ENCODE measurements at regions of chr4 and their contacts with region 1.

Region 1: GRCh38 chr4:148441986-148442831 is at the start of gene NR3C2:
- DNase-seq: peak; percentile 95 to 99 (median 97)
- ATAC-seq: peak; percentile 74
- H3K4me3 ChIP-seq: peak within 1 kb of the TSS; percentile 95
- H3K4me3 Mint-ChIP-seq: peak within 1 kb of the TSS; percentile 98
- H3K27ac ChIP-seq: peak within 1 kb of the TSS; percentile 93 to 99
- H3K27ac Mint-ChIP-seq: peak within 1 kb of the TSS; percentile 99
- H3K4me1 ChIP-seq: peaks cover 48% of the 10 kb centered on the region
- H3K4me1 Mint-ChIP-seq: peaks cover 53% of the 10 kb centered on the region
- H3K27me3 ChIP-seq: no peaks in the 10 kb centered on the region
- H3K27me3 Mint-ChIP-seq: no peaks in the 10 kb centered on the region
- CTCF ChIP-seq: no peak
- total RNA-seq, gene NR3C2: 29.6 to 32.4 TPM

Region 2: GRCh38 chr4:147683717-147684700 is 758.2 kb before region 1 on chr4 and contains the start of gene PRMT9:
- CTCF ChIA-PET with region 1: no interaction called
- POLR2A ChIA-PET with region 1: interaction called, 4 read pairs
- intact Hi-C with region 1: loop called (anchors 1 to 5 kb)
- DNase-seq: peak; percentile 74 to 94 (median 88)
- ATAC-seq: peak; percentile 97
- H3K4me3 ChIP-seq: peak within 1 kb of the TSS; percentile 68 to 98
- H3K4me3 Mint-ChIP-seq: peak within 1 kb of the TSS; percentile 98
- H3K27ac ChIP-seq: peak within 1 kb of the TSS; percentile 92 to 98
- H3K27ac Mint-ChIP-seq: peak within 1 kb of the TSS; percentile 99
- H3K4me1 ChIP-seq: peaks cover 11% of the 10 kb centered on the region
- H3K4me1 Mint-ChIP-seq: peaks cover 40% of the 10 kb centered on the region
- H3K27me3 ChIP-seq: no peaks in the 10 kb centered on the region
- H3K27me3 Mint-ChIP-seq: peaks cover 8% of the 10 kb centered on the region
- CTCF ChIP-seq: no peak
- total RNA-seq, gene PRMT9: 36.4 to 40.3 TPM

Region 3: DNA sequence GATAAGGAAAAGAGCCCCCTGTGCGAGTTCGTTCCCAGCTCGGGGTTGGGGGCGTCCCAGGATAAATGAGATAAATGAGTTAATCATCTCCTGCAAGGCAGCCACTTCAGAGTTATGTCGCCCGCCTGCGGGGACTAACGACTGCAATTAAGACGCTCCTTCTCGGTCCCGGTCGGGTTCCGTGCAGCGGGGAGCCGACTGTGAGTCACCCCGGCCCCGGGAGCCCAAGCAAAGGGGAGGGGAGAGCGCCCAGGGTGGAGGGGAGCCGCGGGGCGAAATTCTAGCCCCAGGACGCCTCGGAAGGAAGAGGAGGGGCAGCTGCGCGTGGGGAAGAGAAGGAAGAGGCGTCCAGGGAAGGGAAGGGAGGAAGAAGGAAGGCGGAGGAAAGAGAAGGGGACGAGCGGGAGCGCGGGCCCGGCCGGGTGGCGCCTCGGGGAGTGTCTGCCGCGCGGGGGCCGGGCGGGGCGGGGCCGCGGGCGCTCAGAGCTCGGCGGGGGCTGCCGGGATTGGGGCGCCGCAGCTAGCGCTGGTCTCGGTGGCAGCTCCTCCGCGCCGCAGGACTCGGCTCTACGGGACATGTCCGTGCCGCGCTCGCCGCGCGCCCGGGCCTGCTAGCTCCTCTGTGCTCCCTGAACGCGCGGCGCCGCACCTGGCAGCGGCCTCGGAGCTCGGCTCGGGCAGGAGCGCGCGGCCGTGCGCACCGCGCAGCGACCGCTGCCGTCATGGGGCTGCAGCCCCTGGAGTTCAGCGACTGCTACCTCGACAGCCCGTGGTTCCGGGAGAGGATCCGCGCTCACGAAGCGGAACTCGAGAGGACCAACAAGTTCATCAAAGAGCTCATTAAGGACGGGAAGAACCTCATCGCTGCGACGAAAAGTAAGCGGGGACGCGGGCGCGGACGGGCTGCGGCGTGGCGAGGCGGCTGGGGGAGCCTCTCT is 710.4 kb before region 1 on chr4 and contains the start of gene ARHGAP10:
- CTCF ChIA-PET with region 1: no interaction called
- POLR2A ChIA-PET with region 1: interaction called, 10 read pairs
- intact Hi-C with region 1: loop called (anchors 5 kb)
- DNase-seq: peak; percentile 18 to 79 (median 72)
- ATAC-seq: peak; percentile 66
- H3K4me3 ChIP-seq: peak within 1 kb of the TSS; percentile 91
- H3K4me3 Mint-ChIP-seq: peak within 1 kb of the TSS; percentile 90
- H3K27ac ChIP-seq: peak within 1 kb of the TSS; percentile 55 to 60
- H3K27ac Mint-ChIP-seq: peak within 1 kb of the TSS; percentile 83
- H3K4me1 ChIP-seq: peaks cover 18% of the 10 kb centered on the region
- H3K4me1 Mint-ChIP-seq: peaks cover 32% of the 10 kb centered on the region
- H3K27me3 ChIP-seq: no peaks in the 10 kb centered on the region
- H3K27me3 Mint-ChIP-seq: peaks cover 2% of the 10 kb centered on the region
- CTCF ChIP-seq: no peak
- total RNA-seq, gene ARHGAP10: 7.2 to 7.4 TPM

Region 4: DNA sequence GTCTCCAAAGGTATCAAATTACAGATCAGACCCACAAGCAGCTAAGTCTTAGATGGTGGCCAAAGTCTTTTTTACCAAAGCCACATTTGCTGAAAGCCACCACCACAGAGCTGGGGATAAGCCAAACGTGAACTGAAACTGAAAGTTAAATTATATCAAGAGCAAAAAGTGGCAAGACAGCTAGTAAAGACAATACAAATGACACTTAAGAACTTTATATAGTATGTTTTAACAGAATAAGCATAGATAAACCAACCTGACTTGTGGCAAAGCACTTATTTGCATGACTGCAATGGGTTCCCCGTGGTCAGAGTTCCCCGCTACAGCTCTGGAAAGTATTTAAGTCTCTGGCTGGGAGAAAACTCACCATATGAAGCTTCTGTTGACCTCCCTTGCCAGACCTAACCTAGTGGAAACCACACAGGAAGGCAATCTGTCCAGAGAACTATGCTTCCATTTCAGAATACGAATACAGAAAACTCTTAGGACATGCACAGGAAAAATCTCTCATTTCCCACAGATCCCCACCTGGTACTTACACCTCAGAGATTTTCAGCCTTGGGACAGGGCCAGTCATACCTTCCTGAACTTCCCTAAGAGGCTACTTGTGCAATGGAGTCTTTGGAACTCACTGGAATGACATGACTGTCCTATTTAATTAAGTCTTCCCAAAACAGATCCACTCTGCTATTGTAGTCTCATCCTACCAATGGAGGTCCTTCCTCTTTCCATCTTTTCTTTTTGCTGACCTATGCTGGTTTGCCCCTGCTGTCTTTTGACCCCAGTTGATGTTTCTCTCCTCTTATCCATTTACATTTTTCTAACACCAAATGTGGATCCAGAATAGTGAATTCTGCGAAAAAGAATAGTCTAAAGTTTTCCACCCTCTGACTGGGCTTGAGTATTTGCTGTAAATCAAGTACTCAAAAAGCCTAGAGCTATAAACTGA is 225.1 kb before region 1 on chr4:
- CTCF ChIA-PET with region 1: no interaction called
- POLR2A ChIA-PET with region 1: interaction called, 8 read pairs
- intact Hi-C with region 1: loop called in 1 of 2 experiments (anchors 5 kb)
- DNase-seq: peak in 3 of 9 experiments; percentile 19 to 65 (median 53)
- ATAC-seq: peak; percentile 82
- H3K4me3 ChIP-seq: peak overlapping the region; percentile 19 to 44
- H3K4me3 Mint-ChIP-seq: peak overlapping the region; percentile 67
- H3K27ac ChIP-seq: peak overlapping the region; percentile 8 to 86
- H3K27ac Mint-ChIP-seq: peak overlapping the region; percentile 85
- H3K4me1 ChIP-seq: peaks cover 16% of the 10 kb centered on the region
- H3K4me1 Mint-ChIP-seq: peaks cover 37% of the 10 kb centered on the region
- H3K27me3 ChIP-seq: no peaks in the 10 kb centered on the region
- H3K27me3 Mint-ChIP-seq: no peaks in the 10 kb centered on the region
- CTCF ChIP-seq: no peak

Region 5: DNA sequence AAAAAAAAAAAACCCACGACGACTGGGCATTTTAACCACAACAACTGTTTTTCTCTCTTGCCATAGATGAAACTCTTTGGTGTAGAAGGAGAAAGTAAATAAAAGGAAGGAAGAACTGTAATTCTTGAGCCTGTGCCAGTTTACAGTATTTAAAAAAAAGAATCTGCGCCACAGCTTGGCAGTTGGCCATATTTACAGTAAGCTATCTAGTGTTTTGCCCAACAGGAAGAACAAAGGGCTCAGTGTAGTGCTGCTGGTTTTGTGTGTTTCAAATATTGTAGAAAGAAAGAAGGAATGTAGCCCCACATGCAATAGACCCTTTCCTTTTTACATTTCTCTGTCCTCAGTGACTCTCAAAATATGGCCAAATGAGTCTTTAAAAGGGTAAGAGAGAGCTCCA is 66.1 kb before region 1 on chr4:
- CTCF ChIA-PET with region 1: no interaction called
- POLR2A ChIA-PET with region 1: interaction called, 40 read pairs
- intact Hi-C with region 1: loop called (anchors 2 kb)
- DNase-seq: peak; percentile 4 to 86 (median 61)
- ATAC-seq: peak; percentile 85
- H3K4me3 ChIP-seq: peak overlapping the region; percentile 24 to 30
- H3K4me3 Mint-ChIP-seq: peak overlapping the region; percentile 79
- H3K27ac ChIP-seq: peak overlapping the region; percentile 60 to 70
- H3K27ac Mint-ChIP-seq: peak overlapping the region; percentile 93
- H3K4me1 ChIP-seq: peaks cover 22% of the 10 kb centered on the region
- H3K4me1 Mint-ChIP-seq: peaks cover 46% of the 10 kb centered on the region
- H3K27me3 ChIP-seq: no peaks in the 10 kb centered on the region
- H3K27me3 Mint-ChIP-seq: no peaks in the 10 kb centered on the region
- CTCF ChIP-seq: no peak

Region 6: DNA sequence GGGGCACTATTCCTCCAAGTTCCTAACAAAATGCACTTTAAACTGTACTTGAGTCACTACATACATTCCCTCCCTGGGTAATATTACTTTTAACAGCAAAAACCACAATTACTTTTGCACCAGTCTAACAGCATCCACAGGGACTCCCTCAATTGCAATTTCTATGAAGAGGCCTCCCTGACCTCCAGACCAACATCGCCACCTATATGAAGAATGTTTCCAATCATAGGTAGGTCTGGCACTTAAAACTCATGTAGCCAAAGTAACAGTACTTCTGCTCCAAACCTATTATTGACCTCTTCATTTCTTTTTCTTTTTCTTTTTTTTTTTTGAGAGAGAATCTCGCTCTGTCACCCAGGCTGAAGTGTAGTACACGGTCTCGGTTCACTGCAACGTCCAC is 15.6 kb before region 1 on chr4:
- CTCF ChIA-PET with region 1: no interaction called
- POLR2A ChIA-PET with region 1: interaction called, 10 read pairs
- intact Hi-C with region 1: loop called in 1 of 2 experiments (anchors 1 kb)
- DNase-seq: no peak
- ATAC-seq: no peak
- H3K4me3 ChIP-seq: no peak overlapping the region
- H3K4me3 Mint-ChIP-seq: no peak overlapping the region
- H3K27ac ChIP-seq: no peak overlapping the region
- H3K27ac Mint-ChIP-seq: no peak overlapping the region
- H3K4me1 ChIP-seq: peaks cover 71% of the 10 kb centered on the region
- H3K4me1 Mint-ChIP-seq: peaks cover 86% of the 10 kb centered on the region
- H3K27me3 ChIP-seq: no peaks in the 10 kb centered on the region
- H3K27me3 Mint-ChIP-seq: no peaks in the 10 kb centered on the region
- CTCF ChIP-seq: no peak

Measured in CD8-positive, alpha-beta T cell (primary cell).